ENCODE measurements at regions of chr21 and their contacts with region 1.

Region 1: DNA sequence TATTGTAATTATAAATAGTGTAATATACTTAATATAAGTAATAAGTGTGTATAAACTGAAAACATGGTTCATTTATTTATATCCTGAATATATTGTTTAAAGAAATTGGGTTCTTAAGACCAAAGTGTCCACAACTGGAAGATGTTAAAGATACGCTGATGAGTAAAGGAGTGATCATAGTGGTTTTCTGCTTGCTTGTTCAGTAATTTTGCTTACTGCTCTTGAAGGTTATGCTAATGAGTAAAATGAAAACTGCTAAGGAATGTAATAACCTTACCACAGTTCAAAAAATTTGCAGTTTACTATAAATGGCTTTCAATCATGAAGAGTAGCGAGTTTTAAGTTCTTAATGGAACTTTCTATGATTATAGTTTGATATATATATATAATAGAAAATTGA is 22.0 kb downstream of the DONSON start:
- DNase-seq: no peak
- H3K4me3 Mint-ChIP-seq: no peak overlapping the region
- H3K27ac Mint-ChIP-seq: no peak overlapping the region
- H3K4me1 Mint-ChIP-seq: peaks cover 22% of the 10 kb centered on the region
- H3K27me3 Mint-ChIP-seq: no peaks in the 10 kb centered on the region

Region 2: DNA sequence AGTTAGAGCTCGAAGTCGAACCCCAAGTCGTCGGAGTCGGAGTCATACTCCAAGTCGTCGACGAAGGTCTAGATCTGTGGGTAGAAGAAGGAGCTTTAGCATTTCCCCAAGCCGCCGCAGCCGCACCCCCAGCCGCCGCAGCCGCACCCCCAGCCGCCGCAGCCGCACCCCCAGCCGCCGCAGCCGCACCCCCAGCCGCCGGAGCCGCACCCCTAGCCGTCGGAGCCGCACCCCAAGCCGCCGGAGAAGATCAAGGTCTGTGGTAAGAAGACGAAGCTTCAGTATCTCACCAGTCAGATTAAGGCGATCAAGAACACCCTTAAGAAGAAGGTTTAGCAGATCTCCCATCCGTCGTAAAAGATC is 11.6 kb before region 1 on chr21:
- intact Hi-C with region 1: loop called (anchors 2 kb)
- DNase-seq: no peak
- H3K4me3 Mint-ChIP-seq: no peak overlapping the region
- H3K27ac Mint-ChIP-seq: no peak overlapping the region
- H3K4me1 Mint-ChIP-seq: peaks cover 49% of the 10 kb centered on the region
- H3K27me3 Mint-ChIP-seq: no peaks in the 10 kb centered on the region

Region 3: DNA sequence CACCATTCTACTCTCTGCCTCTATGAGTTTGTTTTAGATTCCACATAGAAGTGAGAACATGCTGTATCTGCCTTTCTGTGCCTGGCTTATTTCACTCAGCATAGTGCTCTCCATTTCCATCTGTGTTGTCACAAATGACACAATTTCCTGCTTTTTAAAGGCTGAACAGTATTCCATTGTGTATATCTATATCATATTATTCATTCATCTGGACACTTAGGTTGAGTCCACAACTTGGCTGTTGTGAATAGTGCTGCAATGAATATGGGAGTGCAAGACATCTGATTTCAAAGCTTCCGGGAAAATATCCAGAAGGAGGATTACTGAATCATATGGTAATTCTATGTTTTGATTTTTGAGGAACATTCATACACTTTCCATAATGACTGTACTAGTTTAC is 42.0 kb after region 1 on chr21:
- intact Hi-C with region 1: loop called (anchors 5 kb)
- DNase-seq: no peak
- H3K4me3 Mint-ChIP-seq: no peak overlapping the region
- H3K27ac Mint-ChIP-seq: no peak overlapping the region
- H3K4me1 Mint-ChIP-seq: no peaks in the 10 kb centered on the region
- H3K27me3 Mint-ChIP-seq: no peaks in the 10 kb centered on the region